CD4-positive, alpha-beta memory T cell (primary cell): ENCODE measurements at regions of chr1 and their contacts with region 1.

Region 1: DNA sequence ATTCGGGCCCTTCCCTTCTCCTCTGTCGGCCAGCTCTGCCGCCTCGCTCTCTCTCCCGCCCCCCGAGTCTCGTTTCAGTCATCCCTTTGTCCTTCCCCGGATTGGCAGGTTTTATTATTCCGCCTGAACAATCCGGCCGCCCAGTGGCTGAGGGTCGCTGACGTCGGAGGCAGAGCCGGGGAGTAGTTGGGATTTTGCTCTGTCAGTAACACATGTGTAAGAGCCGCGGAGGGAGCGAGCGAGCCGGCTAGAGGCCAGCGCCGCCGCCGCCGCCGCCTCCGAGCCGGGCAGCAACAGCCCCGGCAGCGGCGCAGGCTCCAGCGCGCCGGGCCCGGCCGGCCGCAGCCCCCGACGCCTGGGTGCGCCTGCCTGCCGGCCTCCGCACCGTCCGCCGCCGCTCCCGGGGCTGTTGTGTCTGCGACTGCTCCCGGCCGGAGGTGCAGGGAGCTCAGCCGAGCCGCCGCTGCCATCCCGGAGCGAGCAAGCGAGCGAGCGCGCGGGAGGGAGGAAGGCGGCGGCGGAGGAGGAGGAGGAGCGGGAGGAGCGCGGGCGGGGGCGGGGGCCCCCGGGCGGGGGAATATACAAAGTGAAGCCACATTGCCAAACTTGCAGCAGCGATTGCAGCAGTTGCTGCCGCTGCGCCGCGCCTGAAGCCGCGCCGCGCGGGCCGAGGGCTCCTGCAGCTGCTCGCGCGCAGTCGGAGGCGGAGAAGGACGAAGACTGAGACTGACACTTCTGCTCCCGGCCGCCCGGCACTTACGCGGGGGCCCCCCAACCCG is at the start of gene LMO4:
- DNase-seq: peak; percentile 80 to 91 (median 82)
- H3K4me3 ChIP-seq: peak within 1 kb of the TSS; percentile 55 to 71
- H3K4me3 Mint-ChIP-seq: peak within 1 kb of the TSS; percentile 96 to 98 (median 97)
- H3K27ac ChIP-seq: peak within 1 kb of the TSS; percentile 69
- H3K27ac Mint-ChIP-seq: peak within 1 kb of the TSS; percentile 91 to 98 (median 95)
- H3K4me1 ChIP-seq: peaks cover 32% of the 10 kb centered on the region
- H3K4me1 Mint-ChIP-seq: peaks cover 26 to 51% (median 36%) of the 10 kb centered on the region in 4 donors
- H3K27me3 ChIP-seq: no peaks in the 10 kb centered on the region
- H3K27me3 Mint-ChIP-seq: peaks cover 0 to 1% of the 10 kb centered on the region in 2 donors
- total RNA-seq, gene LMO4: 25.0 TPM

Region 2: DNA sequence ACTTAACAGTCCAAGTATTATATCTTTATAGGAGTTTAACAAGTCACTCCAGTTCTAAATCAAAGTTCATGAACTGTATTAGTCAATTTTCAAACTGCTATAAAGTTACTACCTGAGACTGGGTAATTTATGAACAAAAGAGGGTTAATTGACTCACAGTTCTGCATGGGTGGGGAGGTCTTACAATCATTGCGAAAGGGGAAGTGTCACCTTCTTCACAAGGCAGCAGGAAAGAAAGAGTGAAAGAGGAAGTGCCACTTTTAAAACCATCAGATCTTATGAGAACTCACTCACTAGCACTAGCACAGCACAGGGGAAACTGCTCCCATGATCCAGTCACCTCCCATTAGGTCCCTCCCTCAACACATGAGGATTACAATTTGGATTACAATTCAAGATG is 711.6 kb before region 1 on chr1:
- CTCF ChIA-PET with region 1: no interaction called
- POLR2A ChIA-PET with region 1: no interaction called
- intact Hi-C with region 1: no loop called
- DNase-seq: no peak
- H3K4me3 ChIP-seq: no peak overlapping the region
- H3K4me3 Mint-ChIP-seq: no peak overlapping the region
- H3K27ac ChIP-seq: no peak overlapping the region
- H3K27ac Mint-ChIP-seq: no peak overlapping the region
- H3K4me1 ChIP-seq: no peaks in the 10 kb centered on the region
- H3K4me1 Mint-ChIP-seq: peaks cover 0 to 2% (median under 1%) of the 10 kb centered on the region in 4 donors
- H3K27me3 ChIP-seq: no peaks in the 10 kb centered on the region
- H3K27me3 Mint-ChIP-seq: peaks cover 5 to 10% of the 10 kb centered on the region in 2 donors

Region 3: GRCh38 chr1:86913896-86914634 is 414.4 kb before region 1 on chr1 and contains the start of gene SELENOF:
- CTCF ChIA-PET with region 1: no interaction called
- POLR2A ChIA-PET with region 1: interaction called, 8 read pairs
- intact Hi-C with region 1: loop called (anchors 1 kb)
- DNase-seq: peak; percentile 98 to 100 (median 99)
- H3K4me3 ChIP-seq: peak within 1 kb of the TSS; percentile 82 to 91
- H3K4me3 Mint-ChIP-seq: no peak within 1 kb of the TSS
- H3K27ac ChIP-seq: peak within 1 kb of the TSS; percentile 81
- H3K27ac Mint-ChIP-seq: peak within 1 kb of the TSS in 1 of 7 donors; percentile 31
- H3K4me1 ChIP-seq: peaks cover 47% of the 10 kb centered on the region
- H3K4me1 Mint-ChIP-seq: peaks cover 29 to 43% (median 41%) of the 10 kb centered on the region in 4 donors
- H3K27me3 ChIP-seq: no peaks in the 10 kb centered on the region
- H3K27me3 Mint-ChIP-seq: no peaks in the 10 kb centered on the region
- total RNA-seq, gene SELENOF: 151 to 169 TPM

Region 4: DNA sequence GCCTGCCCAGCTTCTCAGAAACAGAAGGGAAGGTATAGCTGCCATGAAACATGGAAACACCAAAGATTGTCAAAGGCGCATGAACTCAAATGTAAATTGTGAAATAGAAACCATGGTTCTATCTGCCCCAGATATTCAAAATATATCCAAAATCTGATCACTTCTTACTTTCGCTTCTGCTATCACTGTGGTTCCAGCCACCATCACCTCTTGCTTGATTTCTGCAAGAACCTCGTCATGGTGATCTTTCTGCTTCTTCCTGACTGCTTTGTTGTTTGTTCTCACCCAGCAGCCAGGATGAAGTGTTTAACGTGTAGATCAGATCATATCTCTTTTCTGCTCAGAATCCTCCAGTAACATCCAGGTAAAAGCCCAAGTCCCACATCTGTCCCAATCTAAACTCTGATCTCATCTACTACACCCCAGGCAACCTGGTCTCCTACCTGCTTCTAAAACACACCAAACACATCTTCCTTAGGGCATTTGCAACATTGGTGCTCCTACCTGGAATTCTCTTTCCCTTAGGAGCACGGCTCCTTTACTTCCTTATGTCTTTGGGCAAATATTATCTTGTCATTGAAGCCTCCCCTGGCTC is 10.3 kb before region 1 on chr1:
- CTCF ChIA-PET with region 1: interaction called, 14 read pairs
- POLR2A ChIA-PET with region 1: no interaction called
- intact Hi-C with region 1: no loop called
- DNase-seq: no peak
- H3K4me3 ChIP-seq: no peak overlapping the region
- H3K4me3 Mint-ChIP-seq: no peak overlapping the region
- H3K27ac ChIP-seq: no peak overlapping the region
- H3K27ac Mint-ChIP-seq: no peak overlapping the region
- H3K4me1 ChIP-seq: no peaks in the 10 kb centered on the region
- H3K4me1 Mint-ChIP-seq: peaks cover 0 to 7% (median 4%) of the 10 kb centered on the region in 4 donors
- H3K27me3 ChIP-seq: no peaks in the 10 kb centered on the region
- H3K27me3 Mint-ChIP-seq: peaks cover 4 to 12% of the 10 kb centered on the region in 2 donors

Region 5: GRCh38 chr1:87402241-87403002 is 74.0 kb after region 1 on chr1:
- CTCF ChIA-PET with region 1: interaction called, 18 read pairs
- POLR2A ChIA-PET with region 1: interaction called, 34 read pairs
- intact Hi-C with region 1: loop called (anchors 1 kb)
- DNase-seq: no peak
- H3K4me3 ChIP-seq: no peak overlapping the region
- H3K4me3 Mint-ChIP-seq: no peak overlapping the region
- H3K27ac ChIP-seq: no peak overlapping the region
- H3K27ac Mint-ChIP-seq: peak overlapping the region in 3 of 7 donors; percentile 8 to 71 (median 22)
- H3K4me1 ChIP-seq: peaks cover 22% of the 10 kb centered on the region
- H3K4me1 Mint-ChIP-seq: peaks cover 18 to 35% (median 24%) of the 10 kb centered on the region in 4 donors
- H3K27me3 ChIP-seq: no peaks in the 10 kb centered on the region
- H3K27me3 Mint-ChIP-seq: no peaks in the 10 kb centered on the region

Region 6: DNA sequence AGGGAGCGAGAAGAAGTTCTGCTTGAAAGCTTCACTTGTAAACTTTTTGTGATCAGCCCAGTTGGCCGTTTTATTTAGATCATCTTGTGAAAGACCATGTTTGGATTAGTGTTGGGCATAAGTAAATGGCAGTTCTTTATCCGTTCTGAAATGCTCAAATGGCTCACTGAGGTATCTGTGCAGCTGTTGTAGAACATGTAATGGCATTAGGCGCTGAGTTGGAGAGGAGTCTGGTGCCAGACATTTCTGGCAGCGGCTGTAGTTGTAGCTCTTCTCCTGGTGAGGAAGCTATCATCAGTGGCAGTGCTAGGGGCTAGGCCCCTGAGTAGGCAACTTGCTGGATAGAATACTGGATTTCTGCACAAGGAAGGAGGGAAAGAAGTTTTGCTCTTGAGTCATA is 321.8 kb after region 1 on chr1:
- CTCF ChIA-PET with region 1: no interaction called
- POLR2A ChIA-PET with region 1: no interaction called
- intact Hi-C with region 1: loop called (anchors 10 kb)
- DNase-seq: no peak
- H3K4me3 ChIP-seq: no peak overlapping the region
- H3K4me3 Mint-ChIP-seq: no peak overlapping the region
- H3K27ac ChIP-seq: no peak overlapping the region
- H3K27ac Mint-ChIP-seq: no peak overlapping the region
- H3K4me1 ChIP-seq: no peaks in the 10 kb centered on the region
- H3K4me1 Mint-ChIP-seq: peaks cover 0 to 3% (median under 1%) of the 10 kb centered on the region in 4 donors
- H3K27me3 ChIP-seq: no peaks in the 10 kb centered on the region
- H3K27me3 Mint-ChIP-seq: peaks cover 0 to 7% of the 10 kb centered on the region in 2 donors

Region 7: GRCh38 chr1:88683541-88684481 is 1355.3 kb after region 1 on chr1 and contains the start of gene PKN2:
- CTCF ChIA-PET with region 1: no interaction called
- POLR2A ChIA-PET with region 1: interaction called, 3 read pairs
- intact Hi-C with region 1: loop called (anchors 2 kb)
- DNase-seq: peak; percentile 97 to 98 (median 98)
- H3K4me3 ChIP-seq: peak within 1 kb of the TSS; percentile 43 to 82
- H3K4me3 Mint-ChIP-seq: peak within 1 kb of the TSS; percentile 95 to 99 (median 97)
- H3K27ac ChIP-seq: peak within 1 kb of the TSS; percentile 85
- H3K27ac Mint-ChIP-seq: peak within 1 kb of the TSS; percentile 96 to 99 (median 98)
- H3K4me1 ChIP-seq: peaks cover 39% of the 10 kb centered on the region
- H3K4me1 Mint-ChIP-seq: peaks cover 15 to 58% (median 24%) of the 10 kb centered on the region in 4 donors
- H3K27me3 ChIP-seq: no peaks in the 10 kb centered on the region
- H3K27me3 Mint-ChIP-seq: no peaks in the 10 kb centered on the region
- total RNA-seq, gene PKN2: 38.6 to 42.0 TPM